AG04450 (cell line): ENCODE measurements at regions of chr11 and their contacts with region 1.

Region 1: GRCh38 chr11:129364143-129364654 is 11.4 kb upstream of the BARX2 start:
- DNase-seq: peak; percentile 63
- H3K4me3 ChIP-seq: no peak overlapping the region
- H3K27ac ChIP-seq: no peak overlapping the region
- H3K27me3 ChIP-seq: peaks cover 5% of the 10 kb centered on the region
- CTCF ChIP-seq: peak; percentile 100

Region 2: GRCh38 chr11:129346916-129347315 is 17.3 kb before region 1 on chr11:
- CTCF ChIA-PET with region 1: interaction called, 13 read pairs
- POLR2A ChIA-PET with region 1: no interaction called
- DNase-seq: no peak
- H3K4me3 ChIP-seq: no peak overlapping the region
- H3K27ac ChIP-seq: no peak overlapping the region
- H3K27me3 ChIP-seq: peaks cover 1% of the 10 kb centered on the region
- CTCF ChIP-seq: no peak

Region 3: DNA sequence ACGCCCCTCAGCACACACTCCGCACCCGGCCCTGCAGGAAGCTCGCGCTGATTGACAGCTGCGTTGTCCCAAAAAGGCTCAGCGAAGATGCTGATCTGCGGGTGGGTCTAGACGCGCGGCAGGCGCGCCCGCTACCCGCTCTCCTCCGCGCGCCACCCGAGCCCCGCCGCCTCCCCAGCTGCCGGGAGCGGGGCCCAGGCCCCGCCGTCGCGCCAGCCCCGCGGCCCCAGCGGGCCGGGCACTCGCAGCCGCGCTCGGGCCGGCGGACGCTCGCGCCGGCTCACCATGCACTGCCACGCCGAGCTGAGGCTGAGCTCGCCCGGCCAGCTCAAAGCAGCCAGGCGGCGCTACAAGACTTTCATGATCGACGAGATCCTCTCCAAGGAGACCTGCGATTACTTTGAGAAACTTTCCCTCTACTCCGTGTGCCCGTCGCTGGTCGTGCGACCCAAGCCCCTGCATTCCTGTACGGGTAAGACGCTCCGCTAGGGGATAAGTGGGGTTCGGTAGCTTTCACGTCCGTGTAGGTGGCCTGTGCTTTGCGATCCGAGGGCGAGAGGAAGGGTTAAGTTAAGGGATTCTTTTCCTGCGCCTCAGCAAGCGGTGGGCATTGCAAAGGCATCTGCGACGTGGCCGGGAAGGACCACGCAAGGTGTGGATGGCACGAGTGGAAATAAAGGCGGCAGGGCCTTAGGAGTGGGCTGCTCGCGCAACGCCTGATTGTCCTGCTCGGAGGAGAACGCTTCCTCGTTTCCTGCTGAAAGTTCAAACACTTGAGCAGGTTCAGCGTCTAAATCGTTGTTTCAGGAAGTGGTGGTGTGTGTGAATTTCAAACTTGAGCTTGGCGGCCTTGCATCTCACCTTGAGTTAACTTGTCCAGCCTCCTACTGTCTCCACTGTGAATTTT is 11.8 kb after region 1 on chr11 and contains the start of gene BARX2:
- CTCF ChIA-PET with region 1: interaction called, 15 read pairs
- POLR2A ChIA-PET with region 1: no interaction called
- DNase-seq: peak; percentile 11
- H3K4me3 ChIP-seq: 0 out of 2 replicates have a peak within 1 kb of the TSS, but pooled peaks have one; percentile 3
- H3K27ac ChIP-seq: no peak within 1 kb of the TSS
- H3K27me3 ChIP-seq: peaks cover 60% of the 10 kb centered on the region
- CTCF ChIP-seq: peak; percentile 53
- polyA plus RNA-seq, gene BARX2: not detected in 2 replicates

Region 4: GRCh38 chr11:129695575-129696308 is 331.5 kb after region 1 on chr11:
- CTCF ChIA-PET with region 1: interaction called, 24 read pairs
- POLR2A ChIA-PET with region 1: no interaction called
- DNase-seq: no peak
- H3K4me3 ChIP-seq: peak overlapping the region; percentile 32
- H3K27ac ChIP-seq: no peak overlapping the region
- H3K27me3 ChIP-seq: peaks cover 4% of the 10 kb centered on the region
- CTCF ChIP-seq: peak; percentile 72

Region 5: DNA sequence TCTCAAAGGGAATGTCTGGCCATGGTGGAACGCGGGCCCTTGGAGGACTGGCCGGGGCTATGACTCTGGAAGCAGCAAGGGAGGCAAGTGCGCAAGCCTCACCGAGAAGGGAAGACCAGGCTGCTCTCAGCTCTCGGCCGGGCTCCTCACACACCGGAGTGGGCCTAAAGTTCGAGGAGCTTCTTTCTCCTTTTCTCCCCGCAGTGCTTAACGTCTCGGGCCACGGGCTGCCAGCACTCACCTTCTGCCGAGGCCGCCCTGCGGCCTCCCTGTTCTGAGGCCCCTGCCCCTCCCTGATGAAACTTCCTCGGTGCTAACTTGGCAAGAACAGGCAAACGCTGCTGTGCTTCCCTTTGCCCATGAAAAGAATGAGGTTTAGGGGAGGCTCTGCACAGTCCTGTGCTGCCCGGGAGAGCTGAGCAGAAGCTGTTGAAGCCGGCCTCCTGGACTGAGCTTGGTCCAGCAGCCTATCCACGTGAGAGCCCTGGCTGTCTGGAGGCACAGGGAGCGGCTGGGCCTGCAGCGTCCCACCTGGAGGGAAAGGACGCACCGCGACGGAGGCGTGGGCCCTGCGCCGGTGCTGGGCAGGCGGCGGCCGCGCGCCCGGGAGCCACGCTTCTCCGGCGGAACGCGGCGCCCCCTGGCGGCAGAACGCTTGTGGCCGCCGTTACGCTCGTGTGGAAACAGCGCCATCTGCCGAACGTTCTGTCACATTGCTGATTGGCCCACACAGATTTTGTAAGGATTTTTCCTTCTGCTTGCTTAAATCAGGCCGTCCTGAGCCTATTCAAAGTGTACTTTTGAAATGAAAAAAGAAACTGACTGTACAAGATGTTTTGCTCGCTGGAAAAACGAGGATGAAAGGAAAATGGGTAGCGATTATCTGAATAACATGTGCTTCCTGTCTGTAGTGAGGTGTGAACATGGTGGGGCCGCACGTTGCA is 386.4 kb after region 1 on chr11:
- CTCF ChIA-PET with region 1: interaction called, 137 read pairs
- POLR2A ChIA-PET with region 1: no interaction called
- DNase-seq: peak; percentile 50
- H3K4me3 ChIP-seq: peak overlapping the region; percentile 34; the same call in 1 of the 2 replicates
- H3K27ac ChIP-seq: no peak overlapping the region
- H3K27me3 ChIP-seq: peaks cover 20% of the 10 kb centered on the region
- CTCF ChIP-seq: peak; percentile 87